WTC11 (cell line): ENCODE measurements at regions of chr7 and their contacts with region 1.

Region 1: GRCh38 chr7:123705211-123705901 is 43.4 kb downstream of the WASL start:
- DNase-seq: no peak
- ATAC-seq: no peak
- H3K4me3 Mint-ChIP-seq: no peak overlapping the region
- H3K27ac Mint-ChIP-seq: no peak overlapping the region; the same call in 1 of the 2 replicates
- H3K4me1 Mint-ChIP-seq: peaks cover 2% of the 10 kb centered on the region
- H3K27me3 Mint-ChIP-seq: no peaks in the 10 kb centered on the region
- CTCF ChIP-seq: no peak

Region 2: GRCh38 chr7:123397746-123398338 is 307.5 kb before region 1 on chr7:
- CTCF ChIA-PET with region 1: no interaction called
- POLR2A ChIA-PET with region 1: no interaction called
- DNase-seq: no peak
- ATAC-seq: no peak
- H3K4me3 Mint-ChIP-seq: no peak overlapping the region
- H3K27ac Mint-ChIP-seq: no peak overlapping the region
- H3K4me1 Mint-ChIP-seq: peaks cover 30% of the 10 kb centered on the region
- H3K27me3 Mint-ChIP-seq: no peaks in the 10 kb centered on the region
- CTCF ChIP-seq: no peak

Region 3: DNA sequence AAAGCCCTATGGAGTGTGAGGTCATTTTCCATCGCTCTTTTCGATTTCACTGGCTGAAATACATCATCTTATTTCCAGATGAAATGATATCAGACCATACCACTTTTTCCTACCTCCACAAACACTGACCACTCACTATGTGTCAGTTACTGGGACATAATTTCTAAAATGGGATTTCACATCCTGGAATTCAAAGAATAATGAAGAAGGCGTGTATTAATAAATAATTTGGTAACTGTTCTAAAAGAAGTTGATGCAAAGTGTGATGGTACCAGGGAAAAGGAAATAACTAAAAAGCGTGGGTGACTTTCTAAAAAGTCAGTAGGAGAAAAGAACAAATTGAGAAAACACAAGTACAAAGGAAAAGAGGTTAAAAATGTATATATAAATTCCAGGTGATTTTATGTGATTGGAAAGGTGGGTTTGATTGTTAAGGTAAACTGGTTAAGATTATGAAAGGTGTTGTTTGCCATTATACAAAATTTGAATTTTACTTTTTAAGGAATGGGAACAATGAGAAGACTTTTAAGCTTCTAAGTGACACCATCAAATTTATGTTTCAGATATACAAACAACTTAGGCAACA is 147.0 kb before region 1 on chr7:
- CTCF ChIA-PET with region 1: no interaction called
- POLR2A ChIA-PET with region 1: no interaction called
- DNase-seq: no peak
- ATAC-seq: no peak
- H3K4me3 Mint-ChIP-seq: no peak overlapping the region
- H3K27ac Mint-ChIP-seq: no peak overlapping the region
- H3K4me1 Mint-ChIP-seq: no peaks in the 10 kb centered on the region; the same call in 1 of the 2 replicates
- H3K27me3 Mint-ChIP-seq: no peaks in the 10 kb centered on the region
- CTCF ChIP-seq: no peak

Region 4: DNA sequence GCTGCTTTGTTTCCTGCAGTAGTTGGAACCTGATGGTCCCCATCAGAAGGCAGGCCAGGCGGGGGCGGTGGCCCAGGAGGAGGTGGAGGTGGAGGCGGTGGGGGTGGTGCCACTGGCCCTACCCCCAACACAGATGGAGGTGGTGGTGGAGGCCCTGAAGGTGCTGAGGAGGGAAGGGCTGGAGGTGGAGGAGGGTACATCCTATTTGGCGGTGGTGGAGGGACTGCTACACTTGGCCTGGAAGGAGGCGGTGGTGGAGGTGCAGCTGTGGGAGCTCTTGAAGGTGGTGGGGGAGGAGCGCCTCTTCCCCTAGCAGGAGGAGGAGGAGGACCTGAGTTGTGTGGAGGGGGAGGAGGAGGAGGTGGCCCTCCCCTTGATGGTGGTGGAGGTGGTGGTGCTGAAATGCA is 12.9 kb before region 1 on chr7:
- CTCF ChIA-PET with region 1: interaction called, 32 read pairs
- POLR2A ChIA-PET with region 1: no interaction called
- DNase-seq: peak; percentile 77
- ATAC-seq: peak; percentile 100
- H3K4me3 Mint-ChIP-seq: peak overlapping the region; percentile 33
- H3K27ac Mint-ChIP-seq: peak overlapping the region; percentile 84
- H3K4me1 Mint-ChIP-seq: peaks cover 25% of the 10 kb centered on the region
- H3K27me3 Mint-ChIP-seq: no peaks in the 10 kb centered on the region
- CTCF ChIP-seq: no peak